ENCODE measurements at regions of chr16 and their contacts with region 1.

Region 1: GRCh38 chr16:1959269-1960049 is at the start of gene NDUFB10:
- DNase-seq: peak; percentile 89
- H3K4me3 Mint-ChIP-seq: peak within 1 kb of the TSS; percentile 78
- H3K27ac Mint-ChIP-seq: peak within 1 kb of the TSS; percentile 91
- H3K4me1 Mint-ChIP-seq: peaks cover 23% of the 10 kb centered on the region
- H3K27me3 Mint-ChIP-seq: no peaks in the 10 kb centered on the region
- CTCF ChIP-seq: peak; percentile 48
- total RNA-seq, gene NDUFB10: 202 TPM in 2 replicates

Region 2: GRCh38 chr16:1366712-1367492 is 592.6 kb before region 1 on chr16:
- CTCF ChIA-PET with region 1: no interaction called
- POLR2A ChIA-PET with region 1: no interaction called
- intact Hi-C with region 1: no loop called
- DNase-seq: no peak
- H3K4me3 Mint-ChIP-seq: no peak overlapping the region
- H3K27ac Mint-ChIP-seq: no peak overlapping the region
- H3K4me1 Mint-ChIP-seq: no peaks in the 10 kb centered on the region
- H3K27me3 Mint-ChIP-seq: no peaks in the 10 kb centered on the region
- CTCF ChIP-seq: no peak

Region 3: GRCh38 chr16:1876468-1876867 is 83.0 kb before region 1 on chr16:
- CTCF ChIA-PET with region 1: no interaction called
- POLR2A ChIA-PET with region 1: no interaction called
- intact Hi-C with region 1: no loop called
- DNase-seq: no peak
- H3K4me3 Mint-ChIP-seq: no peak overlapping the region
- H3K27ac Mint-ChIP-seq: no peak overlapping the region
- H3K4me1 Mint-ChIP-seq: no peaks in the 10 kb centered on the region
- H3K27me3 Mint-ChIP-seq: no peaks in the 10 kb centered on the region
- CTCF ChIP-seq: no peak

Region 4: GRCh38 chr16:1942810-1943726 is 16.4 kb before region 1 on chr16 and contains the start of gene MSRB1:
- CTCF ChIA-PET with region 1: no interaction called
- POLR2A ChIA-PET with region 1: interaction called, 33 read pairs
- intact Hi-C with region 1: no loop called
- DNase-seq: peak; percentile 99
- H3K4me3 Mint-ChIP-seq: peak within 1 kb of the TSS; percentile 87
- H3K27ac Mint-ChIP-seq: peak within 1 kb of the TSS; percentile 42
- H3K4me1 Mint-ChIP-seq: peaks cover 5% of the 10 kb centered on the region
- H3K27me3 Mint-ChIP-seq: no peaks in the 10 kb centered on the region
- CTCF ChIP-seq: no peak
- total RNA-seq, gene MSRB1: 5.8 and 7.4 TPM in 2 replicates

Region 5: GRCh38 chr16:1971796-1972489 is 12.5 kb after region 1 on chr16 and contains the start of gene TBL3:
- CTCF ChIA-PET with region 1: interaction called, 3 read pairs
- POLR2A ChIA-PET with region 1: interaction called, 56 read pairs
- intact Hi-C with region 1: no loop called
- DNase-seq: peak; percentile 92
- H3K4me3 Mint-ChIP-seq: peak within 1 kb of the TSS; percentile 92
- H3K27ac Mint-ChIP-seq: peak within 1 kb of the TSS; percentile 95
- H3K4me1 Mint-ChIP-seq: peaks cover 13% of the 10 kb centered on the region
- H3K27me3 Mint-ChIP-seq: no peaks in the 10 kb centered on the region
- CTCF ChIP-seq: no peak
- total RNA-seq, gene TBL3: 25.8 and 26.8 TPM in 2 replicates